ENCODE measurements at regions of chr2 and their contacts with region 1.

Region 1: DNA sequence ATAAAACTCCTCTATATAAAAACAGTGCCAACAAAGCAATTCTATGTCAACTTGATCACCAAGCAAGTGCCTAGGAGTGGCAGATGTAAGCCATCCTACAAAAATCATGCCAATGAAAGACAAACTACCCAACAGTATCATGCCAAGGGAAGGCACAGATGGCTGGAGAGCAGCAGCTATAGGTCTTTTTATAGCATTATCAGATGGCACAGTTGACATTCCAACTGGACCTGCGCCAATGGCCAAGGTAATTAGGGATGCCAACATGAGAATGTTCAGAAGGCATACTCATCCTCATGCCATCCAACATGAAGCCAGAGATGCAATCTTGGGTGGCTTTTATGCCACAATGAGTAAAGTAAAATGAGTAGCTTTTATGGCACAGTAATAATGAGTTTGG is 237.3 kb downstream of the OTX1 start:
- DNase-seq: no peak
- H3K4me3 ChIP-seq: no peak overlapping the region
- H3K27ac ChIP-seq: no peak overlapping the region
- H3K4me1 ChIP-seq: no peaks in the 10 kb centered on the region
- H3K27me3 ChIP-seq: no peaks in the 10 kb centered on the region
- CTCF ChIP-seq: no peak
- POLR2A ChIP-seq: no peak

Region 2: DNA sequence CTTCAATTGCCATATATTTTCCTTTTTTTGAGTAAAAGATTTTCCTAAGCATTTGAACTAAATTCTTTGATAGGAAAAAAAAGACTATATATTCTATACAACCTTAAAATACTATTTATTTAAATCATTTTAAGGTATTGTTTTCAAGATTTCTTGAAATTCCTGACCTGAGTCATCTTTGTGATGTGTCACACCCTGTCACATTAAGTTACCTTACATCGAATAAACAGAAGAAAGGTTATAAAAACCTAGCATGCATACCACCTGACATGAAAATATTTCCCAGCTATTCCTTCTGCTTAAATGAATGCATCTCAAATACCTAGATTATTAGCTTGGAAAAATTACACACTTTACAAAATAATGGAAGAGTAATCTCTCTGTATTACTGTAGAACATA is 61.7 kb before region 1 on chr2:
- intact Hi-C with region 1: loop called in 1 of 2 experiments (anchors 10 kb)
- DNase-seq: no peak
- H3K4me3 ChIP-seq: no peak overlapping the region
- H3K27ac ChIP-seq: no peak overlapping the region
- H3K4me1 ChIP-seq: no peaks in the 10 kb centered on the region
- H3K27me3 ChIP-seq: no peaks in the 10 kb centered on the region
- CTCF ChIP-seq: no peak
- POLR2A ChIP-seq: no peak

Measured in adrenal gland (tissue), 19 donors.